CD4-positive, alpha-beta memory T cell (primary cell): ENCODE measurements at regions of chr12 and their contacts with region 1.

Region 1: DNA sequence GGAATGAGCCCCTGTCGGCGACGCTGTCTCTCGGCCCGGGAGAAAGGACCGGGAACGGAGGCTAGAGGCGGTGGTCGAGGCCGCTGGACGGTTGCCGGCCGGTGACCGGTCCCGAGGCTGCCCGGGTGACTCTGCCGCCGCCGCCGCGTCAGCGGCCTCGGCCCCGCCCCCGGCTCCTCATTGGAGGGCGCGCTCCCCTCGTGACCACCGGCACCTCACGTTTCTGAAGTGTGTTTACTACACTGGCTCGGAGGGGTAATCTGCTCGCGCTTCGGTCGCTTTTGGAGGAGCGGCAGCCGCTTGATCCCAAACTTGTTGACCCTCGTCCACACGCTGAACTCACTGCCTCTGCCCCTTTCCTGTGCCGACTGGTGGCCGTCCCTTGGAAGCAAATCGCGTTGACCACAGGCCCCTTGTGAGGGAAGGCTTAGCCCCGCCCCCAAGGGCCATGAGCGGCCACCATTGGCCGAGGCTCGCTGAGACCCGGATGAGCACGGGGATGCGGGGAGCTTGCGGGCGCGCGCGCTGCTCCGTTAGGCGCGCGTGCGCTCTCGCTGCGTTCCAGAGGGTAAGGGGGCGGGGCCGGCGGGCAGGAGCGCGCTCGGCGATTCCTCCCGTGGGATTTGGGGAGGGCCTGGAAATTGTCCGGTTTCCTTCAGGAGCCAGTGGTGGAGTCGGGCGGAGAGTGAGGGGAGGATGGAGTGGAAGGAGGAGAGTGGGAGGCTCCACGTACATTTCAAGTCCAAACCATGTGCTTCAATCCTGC is at the start of gene CRY1:
- DNase-seq: peak; percentile 92 to 97 (median 94)
- H3K4me3 ChIP-seq: peak within 1 kb of the TSS; percentile 94 to 98
- H3K4me3 Mint-ChIP-seq: no peak within 1 kb of the TSS
- H3K27ac ChIP-seq: peak within 1 kb of the TSS; percentile 99
- H3K27ac Mint-ChIP-seq: no peak within 1 kb of the TSS
- H3K4me1 ChIP-seq: peaks cover 26% of the 10 kb centered on the region
- H3K4me1 Mint-ChIP-seq: peaks cover under 1 to 19% (median 11%) of the 10 kb centered on the region in 4 donors
- H3K27me3 ChIP-seq: no peaks in the 10 kb centered on the region
- H3K27me3 Mint-ChIP-seq: peaks cover 0 to 4% of the 10 kb centered on the region in 2 donors
- total RNA-seq, gene CRY1: 31.1 to 32.2 TPM

Region 2: DNA sequence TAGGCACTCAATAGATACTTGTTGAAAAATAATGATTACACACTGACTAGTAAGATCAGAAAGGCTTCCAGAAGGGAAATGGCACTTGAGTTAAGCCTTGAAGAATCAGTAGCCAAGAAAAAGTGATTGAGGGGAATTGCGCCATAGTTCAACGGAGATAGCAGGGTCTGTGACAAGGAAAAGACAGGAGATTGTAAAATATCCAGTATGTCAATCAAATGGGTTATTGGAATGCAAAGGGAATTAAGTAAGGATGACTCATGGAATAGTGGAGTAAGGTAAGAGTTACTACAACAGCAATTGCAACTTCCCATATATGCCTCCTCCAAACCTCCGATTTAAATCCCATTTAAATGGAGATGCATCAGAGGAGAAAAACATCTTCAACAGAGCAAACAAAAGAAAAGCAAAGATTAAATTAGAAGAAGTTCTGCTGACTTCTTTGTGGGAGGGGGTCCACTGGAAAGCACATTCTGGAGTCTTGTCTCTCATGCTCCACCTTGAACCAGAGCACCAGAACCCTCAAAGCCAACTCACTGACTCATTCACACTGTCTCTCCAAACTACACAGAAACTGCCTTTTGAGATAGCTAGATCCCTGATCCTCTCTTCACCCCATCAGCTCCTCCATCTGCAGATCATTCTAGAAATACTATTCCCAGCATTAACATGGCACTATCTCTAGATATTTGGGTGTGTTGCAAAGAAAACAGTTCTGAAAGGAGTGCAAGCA is 1093.1 kb before region 1 on chr12:
- CTCF ChIA-PET with region 1: no interaction called
- POLR2A ChIA-PET with region 1: no interaction called
- intact Hi-C with region 1: no loop called
- DNase-seq: no peak
- H3K4me3 ChIP-seq: no peak overlapping the region
- H3K4me3 Mint-ChIP-seq: no peak overlapping the region
- H3K27ac ChIP-seq: no peak overlapping the region
- H3K27ac Mint-ChIP-seq: no peak overlapping the region
- H3K4me1 ChIP-seq: no peaks in the 10 kb centered on the region
- H3K4me1 Mint-ChIP-seq: no peaks in the 10 kb centered on the region
- H3K27me3 ChIP-seq: no peaks in the 10 kb centered on the region
- H3K27me3 Mint-ChIP-seq: peaks cover 0 to 12% of the 10 kb centered on the region in 2 donors

Region 3: GRCh38 chr12:106302401-106303201 is 791.0 kb before region 1 on chr12 and contains the start of gene TCP11L2:
- CTCF ChIA-PET with region 1: no interaction called
- POLR2A ChIA-PET with region 1: interaction called, 4 read pairs
- intact Hi-C with region 1: loop called (anchors 2 kb)
- DNase-seq: peak; percentile 93 to 95 (median 94)
- H3K4me3 ChIP-seq: peak within 1 kb of the TSS; percentile 86 to 98
- H3K4me3 Mint-ChIP-seq: peak within 1 kb of the TSS; percentile 93 to 99 (median 96)
- H3K27ac ChIP-seq: peak within 1 kb of the TSS; percentile 97
- H3K27ac Mint-ChIP-seq: peak within 1 kb of the TSS; percentile 95 to 100 (median 99)
- H3K4me1 ChIP-seq: peaks cover 59% of the 10 kb centered on the region
- H3K4me1 Mint-ChIP-seq: peaks cover 49 to 73% (median 56%) of the 10 kb centered on the region in 4 donors
- H3K27me3 ChIP-seq: no peaks in the 10 kb centered on the region
- H3K27me3 Mint-ChIP-seq: peaks cover 0 to 1% of the 10 kb centered on the region in 2 donors
- total RNA-seq, gene TCP11L2: 185 to 186 TPM

Region 4: GRCh38 chr12:107014028-107014427 is 79.6 kb before region 1 on chr12:
- CTCF ChIA-PET with region 1: interaction called, 13 read pairs
- POLR2A ChIA-PET with region 1: interaction called, 3 read pairs
- intact Hi-C with region 1: loop called (anchors 1 kb)
- DNase-seq: peak; percentile 19 to 60 (median 39)
- H3K4me3 ChIP-seq: no peak overlapping the region
- H3K4me3 Mint-ChIP-seq: no peak overlapping the region
- H3K27ac ChIP-seq: no peak overlapping the region
- H3K27ac Mint-ChIP-seq: peak overlapping the region in 4 of 7 donors; percentile 13 to 60 (median 34)
- H3K4me1 ChIP-seq: no peaks in the 10 kb centered on the region
- H3K4me1 Mint-ChIP-seq: peaks cover 0 to 6% (median 5%) of the 10 kb centered on the region in 4 donors
- H3K27me3 ChIP-seq: no peaks in the 10 kb centered on the region
- H3K27me3 Mint-ChIP-seq: no peaks in the 10 kb centered on the region

Region 5: DNA sequence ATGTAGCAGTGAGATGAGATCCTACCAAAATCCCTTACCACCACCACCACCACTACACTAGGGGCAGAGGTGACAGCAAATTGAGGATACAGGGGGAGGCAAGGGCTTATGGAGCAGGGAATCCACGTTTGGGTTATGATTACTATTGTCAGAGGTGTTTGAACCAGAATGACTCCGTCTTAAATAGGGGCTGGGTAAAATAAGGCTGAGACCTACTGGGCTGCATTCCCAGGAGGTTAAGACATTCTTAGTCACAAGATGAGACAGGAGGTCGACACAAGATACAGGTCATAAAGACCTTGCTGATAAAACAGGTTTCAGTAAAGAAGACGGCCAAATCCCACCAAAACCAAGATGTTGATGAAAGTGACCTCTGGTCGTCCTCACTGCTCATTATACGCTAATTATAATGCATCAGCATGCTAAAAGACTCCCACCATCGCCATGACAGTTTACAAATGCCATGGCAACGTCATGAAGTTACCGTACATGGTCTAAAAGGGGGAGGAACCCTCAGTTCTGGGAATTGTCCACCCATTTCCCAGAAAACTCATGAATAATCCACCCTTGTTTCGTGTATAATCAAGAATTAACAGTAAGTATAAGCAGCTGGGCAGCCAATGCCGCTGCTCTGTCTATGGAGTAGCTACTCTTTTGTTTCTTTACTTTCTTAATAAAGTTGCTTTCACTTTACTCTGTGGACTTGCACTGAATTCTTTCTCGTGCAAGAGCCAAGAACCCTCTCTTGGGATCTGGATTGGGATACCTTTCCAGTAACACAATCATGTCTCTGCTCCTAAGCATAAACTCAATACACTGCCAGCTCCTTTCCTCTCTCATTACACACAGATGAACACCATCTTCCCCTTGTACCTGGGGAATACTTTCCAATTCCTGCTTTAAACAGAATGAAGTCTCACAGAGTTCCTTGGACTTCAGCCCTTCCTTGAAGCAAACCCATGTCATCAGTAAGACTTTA is 16.4 kb after region 1 on chr12:
- CTCF ChIA-PET with region 1: interaction called, 153 read pairs
- POLR2A ChIA-PET with region 1: interaction called, 40 read pairs
- intact Hi-C with region 1: no loop called
- DNase-seq: no peak
- H3K4me3 ChIP-seq: no peak overlapping the region
- H3K4me3 Mint-ChIP-seq: no peak overlapping the region
- H3K27ac ChIP-seq: no peak overlapping the region
- H3K27ac Mint-ChIP-seq: no peak overlapping the region
- H3K4me1 ChIP-seq: no peaks in the 10 kb centered on the region
- H3K4me1 Mint-ChIP-seq: peaks cover 0 to 3% (median 0%) of the 10 kb centered on the region in 4 donors
- H3K27me3 ChIP-seq: no peaks in the 10 kb centered on the region
- H3K27me3 Mint-ChIP-seq: peaks cover 8 to 20% of the 10 kb centered on the region in 2 donors

Region 6: GRCh38 chr12:107163413-107163812 is 69.8 kb after region 1 on chr12:
- CTCF ChIA-PET with region 1: no interaction called
- POLR2A ChIA-PET with region 1: no interaction called
- intact Hi-C with region 1: no loop called
- DNase-seq: no peak
- H3K4me3 ChIP-seq: no peak overlapping the region
- H3K4me3 Mint-ChIP-seq: no peak overlapping the region
- H3K27ac ChIP-seq: no peak overlapping the region
- H3K27ac Mint-ChIP-seq: no peak overlapping the region
- H3K4me1 ChIP-seq: no peaks in the 10 kb centered on the region
- H3K4me1 Mint-ChIP-seq: no peaks in the 10 kb centered on the region
- H3K27me3 ChIP-seq: no peaks in the 10 kb centered on the region
- H3K27me3 Mint-ChIP-seq: peaks cover 13 to 14% of the 10 kb centered on the region in 2 donors

Region 7: DNA sequence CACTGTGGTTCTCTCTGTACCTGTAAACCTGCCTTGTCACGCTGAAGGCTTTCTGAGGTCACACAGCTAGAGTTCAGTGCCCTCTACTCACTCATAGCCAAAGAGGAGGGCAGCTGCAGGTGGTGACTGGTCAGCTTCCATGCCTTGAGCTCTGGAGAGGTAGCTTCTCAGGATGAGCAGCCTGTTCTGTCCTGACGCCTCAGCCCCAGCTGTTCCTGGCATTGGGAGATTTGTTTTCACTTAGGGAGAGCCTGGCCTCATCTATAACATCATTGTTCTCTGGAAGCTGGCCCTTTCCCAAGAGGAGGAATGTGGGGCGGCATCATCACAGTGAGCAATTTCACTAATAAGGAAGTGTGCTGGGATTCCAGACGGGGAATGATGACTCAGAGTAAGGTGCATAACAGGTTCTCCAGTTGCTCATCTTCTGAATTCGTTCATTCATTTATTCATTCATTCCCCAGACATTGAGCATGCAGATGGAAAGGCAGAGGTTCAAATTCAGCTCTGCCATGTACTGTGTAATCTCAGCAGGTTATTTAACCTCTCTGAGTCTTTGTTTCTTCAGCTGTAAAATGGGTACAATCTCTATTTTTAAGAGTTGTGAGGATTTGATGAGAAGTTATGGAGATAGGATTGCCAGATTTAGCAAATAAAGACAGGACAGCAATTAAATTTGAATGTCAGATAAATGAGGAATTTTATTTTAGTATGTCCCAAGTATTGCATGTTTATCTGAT is 255.6 kb after region 1 on chr12:
- CTCF ChIA-PET with region 1: no interaction called
- POLR2A ChIA-PET with region 1: no interaction called
- intact Hi-C with region 1: no loop called
- DNase-seq: no peak
- H3K4me3 ChIP-seq: no peak overlapping the region
- H3K4me3 Mint-ChIP-seq: no peak overlapping the region
- H3K27ac ChIP-seq: no peak overlapping the region
- H3K27ac Mint-ChIP-seq: no peak overlapping the region
- H3K4me1 ChIP-seq: peaks cover 25% of the 10 kb centered on the region
- H3K4me1 Mint-ChIP-seq: peaks cover 22 to 67% (median 47%) of the 10 kb centered on the region in 4 donors
- H3K27me3 ChIP-seq: no peaks in the 10 kb centered on the region
- H3K27me3 Mint-ChIP-seq: no peaks in the 10 kb centered on the region

Region 8: DNA sequence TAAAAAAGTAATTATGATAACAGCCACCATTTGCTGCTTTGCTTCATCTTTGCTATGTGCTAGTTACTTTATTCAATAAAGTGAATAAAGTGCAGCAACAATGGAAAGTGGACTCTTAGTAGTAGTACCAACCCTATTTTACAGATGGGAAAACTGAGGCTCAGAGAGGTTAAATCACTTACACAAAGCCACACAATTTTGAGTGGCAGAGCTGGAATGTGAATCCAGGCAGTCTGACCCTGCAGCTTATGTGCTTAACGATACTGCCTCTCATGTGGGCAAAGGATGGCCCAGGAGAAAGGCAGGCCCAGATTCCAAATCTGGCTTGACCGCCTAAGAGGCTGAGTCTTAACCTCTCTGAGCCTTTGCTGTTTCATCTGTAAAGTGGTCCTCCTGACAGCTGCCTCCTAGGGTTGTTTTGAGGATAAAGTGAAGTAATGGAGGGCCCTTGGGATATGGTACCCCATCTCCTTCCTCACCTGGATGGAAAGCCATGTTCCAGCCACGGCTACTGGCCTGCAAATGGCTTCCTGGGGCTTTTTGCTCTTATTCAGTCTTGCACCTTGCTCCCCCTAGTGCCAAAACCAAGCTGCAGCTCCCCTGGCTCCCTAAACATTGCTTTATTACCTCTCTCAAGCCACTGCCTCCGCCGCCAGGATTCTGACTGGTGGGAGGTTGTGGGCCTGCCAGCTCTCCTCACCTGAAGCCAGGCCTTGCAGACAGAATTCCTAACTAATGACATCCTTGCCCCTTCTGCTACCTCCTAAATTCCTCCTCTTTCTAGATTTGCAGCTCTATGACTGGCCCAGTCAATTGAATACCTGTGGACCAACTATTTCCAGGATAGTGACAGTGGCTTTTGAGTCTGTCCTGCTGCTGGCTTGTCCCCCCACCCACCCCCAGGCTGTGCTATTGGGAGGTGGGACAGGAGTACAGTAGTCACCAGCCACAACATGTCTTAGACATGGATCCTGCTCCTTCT is 308.7 kb after region 1 on chr12:
- CTCF ChIA-PET with region 1: interaction called, 4 read pairs
- POLR2A ChIA-PET with region 1: no interaction called
- intact Hi-C with region 1: loop called (anchors 1 kb)
- DNase-seq: peak in 4 of 5 donors; percentile 49 to 58 (median 52)
- H3K4me3 ChIP-seq: no peak overlapping the region
- H3K4me3 Mint-ChIP-seq: peak overlapping the region in 1 of 8 donors; percentile 27
- H3K27ac ChIP-seq: no peak overlapping the region
- H3K27ac Mint-ChIP-seq: peak overlapping the region in 4 of 7 donors; percentile 51 to 88 (median 71)
- H3K4me1 ChIP-seq: peaks cover 11% of the 10 kb centered on the region
- H3K4me1 Mint-ChIP-seq: peaks cover 6 to 30% (median 14%) of the 10 kb centered on the region in 4 donors
- H3K27me3 ChIP-seq: no peaks in the 10 kb centered on the region
- H3K27me3 Mint-ChIP-seq: no peaks in the 10 kb centered on the region

Region 9: GRCh38 chr12:107760809-107761501 is 667.4 kb after region 1 on chr12 and contains the start of gene PRDM4:
- CTCF ChIA-PET with region 1: no interaction called
- POLR2A ChIA-PET with region 1: no interaction called
- intact Hi-C with region 1: loop called (anchors 1 kb)
- DNase-seq: peak; percentile 87 to 94 (median 93)
- H3K4me3 ChIP-seq: peak within 1 kb of the TSS; percentile 77 to 82
- H3K4me3 Mint-ChIP-seq: peak within 1 kb of the TSS; percentile 89 to 95 (median 92)
- H3K27ac ChIP-seq: peak within 1 kb of the TSS; percentile 64
- H3K27ac Mint-ChIP-seq: peak within 1 kb of the TSS; percentile 90 to 98 (median 94)
- H3K4me1 ChIP-seq: peaks cover 41% of the 10 kb centered on the region
- H3K4me1 Mint-ChIP-seq: peaks cover 17 to 45% (median 26%) of the 10 kb centered on the region in 4 donors
- H3K27me3 ChIP-seq: no peaks in the 10 kb centered on the region
- H3K27me3 Mint-ChIP-seq: no peaks in the 10 kb centered on the region
- total RNA-seq, gene PRDM4: 35.8 to 38.3 TPM